MCF 10A (cell line): ENCODE measurements at regions of chr4 and their contacts with region 1.

Region 1: GRCh38 chr4:22688236-22688635 is 4.5 kb upstream of the GBA3 start:
- DNase-seq: no peak
- H3K4me3 Mint-ChIP-seq: no peak overlapping the region
- H3K27ac Mint-ChIP-seq: peak overlapping the region; percentile 39
- H3K4me1 Mint-ChIP-seq: peaks cover 14% of the 10 kb centered on the region
- H3K27me3 Mint-ChIP-seq: no peaks in the 10 kb centered on the region
- CTCF ChIP-seq: no peak

Region 2: DNA sequence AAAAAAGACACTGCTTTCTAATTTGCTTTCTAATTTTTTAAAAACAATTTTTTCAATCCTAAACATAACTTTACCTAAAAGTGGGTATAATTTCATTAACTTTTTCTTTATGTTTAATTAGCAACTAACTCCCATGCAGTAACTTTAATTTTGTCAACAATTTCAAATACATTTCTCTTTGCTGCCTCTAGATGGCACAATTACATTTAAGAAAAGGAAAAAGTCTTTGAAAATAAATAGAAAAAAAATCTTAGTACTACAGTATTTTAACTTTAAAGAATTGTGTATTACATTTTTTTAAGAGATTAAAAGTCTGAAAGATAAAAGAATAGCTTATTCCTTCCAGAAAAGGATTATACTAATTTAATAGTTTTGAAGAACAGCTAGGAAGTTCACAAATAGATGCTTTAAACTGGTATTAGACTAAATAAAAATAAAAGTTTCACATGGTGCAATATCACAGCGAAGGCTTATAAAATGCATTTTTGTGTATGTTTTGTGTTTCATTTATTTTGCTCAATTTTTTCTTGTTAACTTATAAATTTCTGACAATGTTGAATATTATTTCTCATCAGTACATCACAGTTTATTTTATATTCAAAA is 277.5 kb before region 1 on chr4:
- CTCF ChIA-PET with region 1: interaction called, 57 read pairs
- POLR2A ChIA-PET with region 1: interaction called, 3 read pairs
- intact Hi-C with region 1: loop called (anchors 1 kb)
- DNase-seq: peak; percentile 22
- H3K4me3 Mint-ChIP-seq: no peak overlapping the region
- H3K27ac Mint-ChIP-seq: no peak overlapping the region
- H3K4me1 Mint-ChIP-seq: no peaks in the 10 kb centered on the region
- H3K27me3 Mint-ChIP-seq: no peaks in the 10 kb centered on the region
- CTCF ChIP-seq: peak; percentile 41

Region 3: DNA sequence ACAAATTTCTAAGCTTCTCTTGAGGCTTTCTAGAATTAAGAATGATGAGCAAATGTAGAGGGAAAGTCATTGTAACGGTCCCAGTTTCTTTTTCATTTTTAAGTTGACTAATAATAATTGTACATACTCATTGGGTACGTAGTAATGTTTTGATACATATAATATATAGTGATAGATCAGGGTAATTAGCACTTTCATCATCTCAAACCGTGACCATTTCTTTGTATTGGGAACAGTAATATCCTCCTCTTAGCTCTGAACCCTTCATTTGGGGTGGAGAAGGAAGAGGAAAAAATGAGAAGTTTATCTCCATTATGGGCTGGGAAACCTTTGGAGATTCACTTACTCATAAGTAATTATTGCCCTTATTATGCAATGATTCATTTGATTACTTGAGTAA is 34.5 kb before region 1 on chr4:
- CTCF ChIA-PET with region 1: no interaction called
- POLR2A ChIA-PET with region 1: no interaction called
- intact Hi-C with region 1: no loop called
- DNase-seq: no peak
- H3K4me3 Mint-ChIP-seq: no peak overlapping the region
- H3K27ac Mint-ChIP-seq: no peak overlapping the region
- H3K4me1 Mint-ChIP-seq: no peaks in the 10 kb centered on the region
- H3K27me3 Mint-ChIP-seq: no peaks in the 10 kb centered on the region
- CTCF ChIP-seq: no peak

Region 4: DNA sequence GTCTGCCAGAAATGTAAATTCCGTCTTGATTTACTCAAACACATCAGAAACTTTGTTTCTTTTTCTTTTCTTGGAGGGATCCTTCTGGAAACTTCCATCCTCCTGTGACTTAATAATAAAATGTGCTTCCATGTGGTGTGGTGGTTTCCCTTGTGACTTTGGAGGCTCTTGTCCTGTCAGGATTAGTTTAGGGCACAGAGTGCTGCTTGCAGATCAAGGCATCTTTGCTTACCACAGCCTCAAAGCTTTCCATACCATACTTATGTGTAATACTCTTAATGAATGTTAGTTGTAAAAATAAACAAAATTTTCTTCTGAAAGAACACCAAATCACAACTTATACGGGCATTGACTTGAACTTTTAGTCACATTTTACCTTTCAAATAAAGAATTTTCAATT is 31.9 kb after region 1 on chr4:
- CTCF ChIA-PET with region 1: no interaction called
- POLR2A ChIA-PET with region 1: no interaction called
- intact Hi-C with region 1: no loop called
- DNase-seq: no peak
- H3K4me3 Mint-ChIP-seq: no peak overlapping the region
- H3K27ac Mint-ChIP-seq: no peak overlapping the region
- H3K4me1 Mint-ChIP-seq: no peaks in the 10 kb centered on the region
- H3K27me3 Mint-ChIP-seq: no peaks in the 10 kb centered on the region
- CTCF ChIP-seq: no peak